ENCODE measurements at regions of chr1 and their contacts with region 1.

Region 1: DNA sequence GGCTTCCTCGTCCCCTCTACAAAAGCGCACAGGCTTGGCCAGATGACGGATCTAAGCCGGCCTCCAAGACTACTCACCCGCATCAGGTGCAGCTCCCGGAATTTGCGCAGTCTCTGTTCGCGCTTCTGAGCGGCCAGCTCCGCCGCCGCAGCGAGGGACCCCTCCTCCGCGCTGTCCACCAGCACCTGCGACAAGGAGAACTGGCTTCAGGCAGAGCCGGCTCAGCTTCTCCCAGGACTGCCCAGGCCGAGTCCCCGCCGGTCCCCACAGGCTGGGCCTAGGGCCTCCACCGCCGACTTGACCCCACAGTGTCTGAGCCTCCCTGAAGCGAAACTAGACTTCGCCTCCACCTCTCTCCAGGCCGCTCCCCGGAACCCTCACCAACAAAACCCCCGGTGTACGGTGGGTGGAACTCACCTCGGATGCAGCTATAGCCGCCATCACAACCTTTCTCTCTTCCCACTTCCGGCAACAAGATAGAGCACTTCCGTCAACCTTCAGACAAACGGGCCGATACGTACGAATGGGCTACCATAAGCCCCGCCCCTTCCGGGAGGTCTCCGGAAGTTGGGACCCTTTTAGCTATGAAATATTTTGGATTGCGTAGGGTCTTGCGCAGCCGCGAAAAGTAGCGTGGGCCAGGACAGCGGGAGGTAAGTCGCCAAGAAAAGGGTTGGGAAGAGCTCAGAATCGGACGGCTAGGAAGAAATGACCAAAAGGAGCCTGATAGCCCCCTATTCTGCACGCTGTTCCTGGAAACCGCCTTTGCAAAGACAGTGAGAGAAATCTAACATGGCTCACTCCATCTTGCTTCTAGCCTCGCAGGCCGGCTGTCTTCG is at the start of gene SYF2:
- DNase-seq: peak; percentile 81 to 97 (median 92)
- ATAC-seq: peak; percentile 89 to 92
- H3K4me3 Mint-ChIP-seq: no peak within 1 kb of the TSS
- H3K27ac Mint-ChIP-seq: no peak within 1 kb of the TSS
- H3K4me1 Mint-ChIP-seq: peaks cover 8 to 51% (median 30%) of the 10 kb centered on the region in 4 donors
- H3K27me3 Mint-ChIP-seq: no peaks in the 10 kb centered on the region
- polyA plus RNA-seq, gene SYF2: 69.1 to 78.6 (median 75.2) TPM

Region 2: GRCh38 chr1:24642481-24643361 is 589.5 kb before region 1 on chr1 and contains the start of gene SRRM1:
- POLR2A ChIA-PET with region 1: interaction called, 13 read pairs
- DNase-seq: peak; percentile 93 to 100 (median 99)
- ATAC-seq: peak; percentile 88 to 89
- H3K4me3 Mint-ChIP-seq: peak within 1 kb of the TSS; percentile 81 to 99 (median 94)
- H3K27ac Mint-ChIP-seq: peak within 1 kb of the TSS; percentile 97 to 100 (median 99)
- H3K4me1 Mint-ChIP-seq: peaks cover 20 to 51% (median 45%) of the 10 kb centered on the region in 4 donors
- H3K27me3 Mint-ChIP-seq: no peaks in the 10 kb centered on the region
- polyA plus RNA-seq, gene SRRM1: 122 to 245 (median 197) TPM

Region 3: DNA sequence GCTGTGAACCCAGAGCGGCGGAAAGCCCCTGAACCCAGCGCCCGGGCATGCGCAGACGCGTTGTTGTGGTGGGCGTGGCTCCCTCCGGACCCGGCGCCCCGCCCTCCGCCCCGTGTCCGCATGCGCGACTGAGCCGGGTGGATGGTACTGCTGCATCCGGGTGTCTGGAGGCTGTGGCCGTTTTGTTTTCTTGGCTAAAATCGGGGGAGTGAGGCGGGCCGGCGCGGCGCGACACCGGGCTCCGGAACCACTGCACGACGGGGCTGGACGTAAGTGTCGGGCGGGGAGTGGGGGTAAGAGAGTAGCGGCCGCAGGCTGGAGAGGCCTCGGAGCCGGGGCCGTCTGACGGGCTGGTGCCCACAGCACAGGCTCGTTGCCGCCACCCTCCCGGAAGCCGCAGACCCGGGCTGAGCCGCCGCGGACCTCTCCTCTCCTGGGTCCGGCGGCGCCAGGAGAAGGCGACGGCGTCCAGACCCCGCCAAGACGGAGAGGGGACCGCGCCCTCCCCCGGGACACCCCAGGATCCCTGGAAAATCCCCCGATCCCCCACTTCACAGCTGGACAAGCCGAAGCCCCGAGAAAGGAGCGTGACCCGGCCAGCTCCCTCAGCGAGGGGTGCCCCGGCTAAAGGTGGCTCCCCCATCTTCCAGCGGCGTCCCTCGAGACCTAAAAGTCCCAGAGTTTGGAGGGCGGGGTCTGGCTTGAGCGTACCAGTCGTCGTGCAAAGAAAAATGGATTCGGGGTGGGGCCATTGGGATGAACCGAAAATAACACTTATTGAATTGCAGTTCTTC is 106.1 kb after region 1 on chr1 and contains the start of gene TMEM50A:
- POLR2A ChIA-PET with region 1: interaction called, 12 read pairs
- DNase-seq: peak; percentile 84 to 94 (median 92)
- ATAC-seq: peak; percentile 36 to 67
- H3K4me3 Mint-ChIP-seq: peak within 1 kb of the TSS; percentile 95 to 97 (median 96)
- H3K27ac Mint-ChIP-seq: peak within 1 kb of the TSS; percentile 80 to 97 (median 96)
- H3K4me1 Mint-ChIP-seq: peaks cover 18 to 56% (median 37%) of the 10 kb centered on the region in 4 donors
- H3K27me3 Mint-ChIP-seq: no peaks in the 10 kb centered on the region
- polyA plus RNA-seq, gene TMEM50A: 130 to 201 (median 146) TPM

Region 4: GRCh38 chr1:25430666-25431505 is 198.6 kb after region 1 on chr1 and contains the start of gene MACO1:
- POLR2A ChIA-PET with region 1: interaction called, 20 read pairs
- DNase-seq: peak; percentile 94 to 99 (median 98)
- ATAC-seq: peak; percentile 84
- H3K4me3 Mint-ChIP-seq: peak within 1 kb of the TSS; percentile 93 to 99 (median 98)
- H3K27ac Mint-ChIP-seq: peak within 1 kb of the TSS; percentile 98 to 100 (median 100)
- H3K4me1 Mint-ChIP-seq: peaks cover 26 to 54% (median 47%) of the 10 kb centered on the region in 4 donors
- H3K27me3 Mint-ChIP-seq: no peaks in the 10 kb centered on the region
- polyA plus RNA-seq, gene MACO1: 7.6 to 8.8 (median 7.6) TPM

Measured in naive thymus-derived CD8-positive, alpha-beta T cell (primary cell).